Naive thymus-derived CD4-positive, alpha-beta T cell (primary cell): ENCODE measurements at regions of chr14 and their contacts with region 1.

Region 1: GRCh38 chr14:61573748-61574513 is 121.4 kb upstream of the HIF1A start:
- DNase-seq: peak in 6 of 9 donors; percentile 40 to 59 (median 52)
- ATAC-seq: peak; percentile 47
- H3K4me3 ChIP-seq: no peak overlapping the region
- H3K4me3 Mint-ChIP-seq: peak overlapping the region in 9 of 10 donors; percentile 12 to 61 (median 48)
- H3K27ac ChIP-seq: no peak overlapping the region
- H3K27ac Mint-ChIP-seq: peak overlapping the region in 5 of 9 donors; percentile 25 to 57 (median 53)
- H3K4me1 ChIP-seq: peaks cover 0 to 36% of the 10 kb centered on the region in 2 donors
- H3K4me1 Mint-ChIP-seq: peaks cover 39 to 84% (median 75%) of the 10 kb centered on the region in 7 donors
- H3K27me3 ChIP-seq: no peaks in the 10 kb centered on the region
- H3K27me3 Mint-ChIP-seq: peaks cover 0 to 24% (median 0%) of the 10 kb centered on the region in 5 donors

Region 2: DNA sequence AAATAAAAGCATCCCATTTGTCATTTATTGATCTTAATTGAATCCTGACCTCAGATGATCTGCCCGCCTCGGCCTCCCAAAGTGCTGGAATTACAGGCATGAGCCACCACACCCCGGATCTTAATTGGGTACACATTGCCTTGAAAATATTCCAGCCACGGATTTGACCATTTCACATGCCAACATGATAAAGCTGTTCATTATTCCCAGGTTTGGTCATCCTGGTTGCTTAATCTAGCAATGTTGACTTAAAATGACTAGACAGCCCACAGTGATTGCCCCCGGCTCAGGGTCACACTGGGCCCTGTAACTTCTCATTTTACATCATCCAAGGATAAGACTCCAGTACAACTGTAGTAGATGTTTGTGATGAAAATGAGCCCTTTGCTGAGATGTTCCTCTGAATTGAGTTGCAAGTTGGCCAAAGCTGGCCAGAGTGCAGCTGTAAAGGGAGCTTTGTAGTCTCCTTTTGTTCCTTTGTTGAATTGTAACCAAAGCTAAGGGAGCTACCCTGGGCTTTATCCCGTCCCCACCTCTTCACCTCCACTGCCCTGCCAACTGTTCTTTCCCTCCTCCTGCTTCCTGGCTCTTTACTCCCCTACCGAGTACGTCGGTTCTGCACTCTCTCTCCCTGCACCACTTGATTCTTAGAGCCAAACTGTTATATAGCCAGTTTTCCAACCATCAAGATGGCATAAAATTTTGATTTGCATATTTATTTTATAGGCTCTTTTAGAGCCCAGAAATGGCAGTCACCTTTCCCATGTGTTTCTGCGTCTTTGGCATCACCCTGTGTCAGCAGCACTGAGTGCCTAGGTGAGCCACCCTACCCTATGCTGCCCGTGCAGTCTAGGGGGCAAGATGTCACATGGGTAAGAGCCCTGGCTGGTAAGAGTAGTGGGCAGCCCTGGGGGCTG is 19.9 kb before region 1 on chr14:
- CTCF ChIA-PET with region 1: interaction called, 3 read pairs
- POLR2A ChIA-PET with region 1: interaction called, 4 read pairs
- intact Hi-C with region 1: loop called (anchors 2 kb)
- DNase-seq: no peak
- ATAC-seq: peak; percentile 43
- H3K4me3 ChIP-seq: no peak overlapping the region
- H3K4me3 Mint-ChIP-seq: peak overlapping the region in 1 of 10 donors; percentile 33
- H3K27ac ChIP-seq: no peak overlapping the region
- H3K27ac Mint-ChIP-seq: peak overlapping the region; percentile 51 to 92 (median 83)
- H3K4me1 ChIP-seq: peaks cover 9 to 12% of the 10 kb centered on the region in 2 donors
- H3K4me1 Mint-ChIP-seq: peaks cover 23 to 71% (median 61%) of the 10 kb centered on the region in 7 donors
- H3K27me3 ChIP-seq: no peaks in the 10 kb centered on the region
- H3K27me3 Mint-ChIP-seq: no peaks in the 10 kb centered on the region

Region 3: DNA sequence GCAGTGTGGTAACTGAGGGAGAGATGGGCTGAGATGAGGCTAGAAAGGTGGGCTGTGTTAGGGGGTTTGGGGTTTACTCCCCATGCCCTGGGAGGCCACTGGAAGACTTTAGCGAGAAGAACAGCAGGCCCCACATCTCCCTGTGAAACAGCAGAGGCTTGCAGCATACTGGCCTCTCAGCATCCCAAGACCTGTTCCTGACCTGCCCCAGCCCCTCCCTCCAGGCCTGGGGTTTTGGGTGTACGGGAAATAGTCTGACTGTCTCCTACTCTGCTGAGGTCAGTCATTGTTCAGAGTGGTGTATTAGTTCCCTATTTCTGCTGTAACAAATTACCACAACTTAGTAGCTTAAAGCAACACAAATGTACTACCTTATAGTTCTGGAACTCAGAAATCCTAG is 17.9 kb after region 1 on chr14:
- CTCF ChIA-PET with region 1: no interaction called
- POLR2A ChIA-PET with region 1: interaction called, 3 read pairs
- intact Hi-C with region 1: loop called (anchors 2 kb)
- DNase-seq: no peak
- ATAC-seq: peak; percentile 68
- H3K4me3 ChIP-seq: no peak overlapping the region
- H3K4me3 Mint-ChIP-seq: no peak overlapping the region
- H3K27ac ChIP-seq: no peak overlapping the region
- H3K27ac Mint-ChIP-seq: no peak overlapping the region
- H3K4me1 ChIP-seq: peaks cover 0 to 4% of the 10 kb centered on the region in 2 donors
- H3K4me1 Mint-ChIP-seq: peaks cover 20 to 52% (median 23%) of the 10 kb centered on the region in 7 donors
- H3K27me3 ChIP-seq: no peaks in the 10 kb centered on the region
- H3K27me3 Mint-ChIP-seq: no peaks in the 10 kb centered on the region

Region 4: DNA sequence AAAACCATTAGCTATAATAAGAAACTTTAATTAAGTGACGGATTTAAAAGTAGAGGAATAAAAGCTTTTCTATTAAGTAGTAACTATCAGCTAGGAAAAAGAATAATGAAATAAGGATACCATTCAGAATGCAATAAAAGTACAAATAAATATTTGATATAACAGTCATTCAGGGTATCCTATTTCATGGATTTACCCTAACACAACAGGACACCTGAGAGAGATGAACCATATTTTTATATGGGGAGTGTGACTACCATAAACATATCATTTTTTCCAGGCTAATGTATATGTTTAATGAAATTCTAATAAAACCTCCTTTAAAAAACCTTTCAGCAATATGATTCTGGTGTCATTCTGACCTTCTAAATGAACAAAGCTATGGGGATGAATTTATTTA is 582.1 kb after region 1 on chr14:
- CTCF ChIA-PET with region 1: no interaction called
- POLR2A ChIA-PET with region 1: no interaction called
- intact Hi-C with region 1: no loop called
- DNase-seq: no peak
- ATAC-seq: no peak
- H3K4me3 ChIP-seq: no peak overlapping the region
- H3K4me3 Mint-ChIP-seq: no peak overlapping the region
- H3K27ac ChIP-seq: no peak overlapping the region
- H3K27ac Mint-ChIP-seq: no peak overlapping the region
- H3K4me1 ChIP-seq: no peaks in the 10 kb centered on the region
- H3K4me1 Mint-ChIP-seq: no peaks in the 10 kb centered on the region
- H3K27me3 ChIP-seq: no peaks in the 10 kb centered on the region
- H3K27me3 Mint-ChIP-seq: peaks cover 10 to 41% (median 36%) of the 10 kb centered on the region in 5 donors